ENCODE measurements at regions of chr4 and their contacts with region 1.

Region 1: GRCh38 chr4:96504386-96504785 is 664.5 kb downstream of the PDHA2 start:
- DNase-seq: no peak
- ATAC-seq: no peak
- H3K4me3 ChIP-seq: no peak overlapping the region
- H3K27ac ChIP-seq: no peak overlapping the region
- H3K4me1 ChIP-seq: no peaks in the 10 kb centered on the region
- H3K27me3 ChIP-seq: no peaks in the 10 kb centered on the region
- CTCF ChIP-seq: no peak
- EP300 ChIP-seq: no peak
- POLR2A ChIP-seq: no peak
- RAD21 ChIP-seq: no peak

Region 2: DNA sequence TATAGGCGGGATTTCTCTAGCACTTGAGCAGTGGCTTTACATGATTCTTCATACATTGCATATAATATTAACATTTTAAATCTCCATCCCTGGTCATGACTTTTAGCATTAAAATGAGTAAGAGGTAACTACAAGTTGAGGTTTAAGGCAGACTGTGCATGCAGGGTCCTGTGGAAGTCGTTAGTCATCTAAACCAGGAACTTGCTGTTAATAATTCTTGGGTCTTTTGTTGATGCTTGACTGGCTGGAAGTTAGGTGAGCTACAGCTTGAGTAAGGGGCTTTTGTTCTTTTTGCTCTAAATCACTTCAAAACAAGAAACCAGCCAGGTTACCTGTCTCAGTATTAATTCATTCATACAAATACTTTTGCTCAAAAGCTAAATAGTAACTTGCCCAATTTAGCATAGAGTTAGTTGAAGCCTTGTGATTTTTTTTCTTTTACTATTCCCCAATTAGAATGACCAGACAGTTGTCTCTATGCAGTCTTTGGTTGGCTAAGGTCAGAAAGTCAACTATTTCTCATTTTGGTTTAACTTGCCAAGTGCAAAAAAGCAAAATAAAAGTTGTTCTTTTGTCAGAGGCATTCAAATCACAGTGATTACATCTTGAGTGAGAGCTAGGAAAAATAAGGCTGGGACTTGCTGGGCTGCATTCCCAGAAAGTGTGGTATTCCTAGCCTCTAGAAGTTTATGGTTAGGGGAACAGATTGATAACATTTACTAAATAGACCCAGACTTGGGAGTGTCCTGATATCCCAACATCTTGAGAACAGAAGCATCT is 147.6 kb before region 1 on chr4:
- CTCF ChIA-PET with region 1: no interaction called
- POLR2A ChIA-PET with region 1: no interaction called
- in situ Hi-C with region 1: no loop called
- intact Hi-C with region 1: no loop called
- DNase-seq: no peak
- ATAC-seq: no peak
- H3K4me3 ChIP-seq: no peak overlapping the region
- H3K27ac ChIP-seq: no peak overlapping the region
- H3K4me1 ChIP-seq: no peaks in the 10 kb centered on the region
- H3K27me3 ChIP-seq: no peaks in the 10 kb centered on the region
- CTCF ChIP-seq: no peak
- EP300 ChIP-seq: no peak
- POLR2A ChIP-seq: no peak
- RAD21 ChIP-seq: no peak

Region 3: DNA sequence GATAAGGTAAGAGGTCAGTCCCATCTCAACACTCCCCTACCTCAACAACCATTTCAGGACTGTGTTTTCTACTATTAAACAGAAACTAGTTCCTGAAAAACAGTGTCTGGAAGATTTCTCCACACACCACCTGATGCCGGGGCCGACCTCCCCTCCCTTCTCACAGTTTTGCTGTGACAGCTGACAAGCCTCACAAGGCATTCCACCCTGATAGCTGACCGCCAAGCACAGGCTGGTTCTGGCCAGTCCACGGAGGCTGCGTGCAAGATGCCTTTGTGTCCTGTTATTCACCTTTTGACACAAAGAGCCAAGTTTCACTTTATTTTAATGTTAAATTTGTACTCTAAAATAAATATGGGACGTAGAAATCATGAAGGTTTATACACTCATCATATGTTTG is 94.1 kb after region 1 on chr4:
- CTCF ChIA-PET with region 1: no interaction called
- POLR2A ChIA-PET with region 1: no interaction called
- in situ Hi-C with region 1: no loop called
- intact Hi-C with region 1: no loop called
- DNase-seq: no peak
- ATAC-seq: no peak
- H3K4me3 ChIP-seq: no peak overlapping the region
- H3K27ac ChIP-seq: no peak overlapping the region
- H3K4me1 ChIP-seq: peaks cover 4% of the 10 kb centered on the region; the same call in 1 of the 2 replicates
- H3K27me3 ChIP-seq: no peaks in the 10 kb centered on the region
- CTCF ChIP-seq: no peak
- EP300 ChIP-seq: no peak
- POLR2A ChIP-seq: no peak
- RAD21 ChIP-seq: no peak

Region 4: DNA sequence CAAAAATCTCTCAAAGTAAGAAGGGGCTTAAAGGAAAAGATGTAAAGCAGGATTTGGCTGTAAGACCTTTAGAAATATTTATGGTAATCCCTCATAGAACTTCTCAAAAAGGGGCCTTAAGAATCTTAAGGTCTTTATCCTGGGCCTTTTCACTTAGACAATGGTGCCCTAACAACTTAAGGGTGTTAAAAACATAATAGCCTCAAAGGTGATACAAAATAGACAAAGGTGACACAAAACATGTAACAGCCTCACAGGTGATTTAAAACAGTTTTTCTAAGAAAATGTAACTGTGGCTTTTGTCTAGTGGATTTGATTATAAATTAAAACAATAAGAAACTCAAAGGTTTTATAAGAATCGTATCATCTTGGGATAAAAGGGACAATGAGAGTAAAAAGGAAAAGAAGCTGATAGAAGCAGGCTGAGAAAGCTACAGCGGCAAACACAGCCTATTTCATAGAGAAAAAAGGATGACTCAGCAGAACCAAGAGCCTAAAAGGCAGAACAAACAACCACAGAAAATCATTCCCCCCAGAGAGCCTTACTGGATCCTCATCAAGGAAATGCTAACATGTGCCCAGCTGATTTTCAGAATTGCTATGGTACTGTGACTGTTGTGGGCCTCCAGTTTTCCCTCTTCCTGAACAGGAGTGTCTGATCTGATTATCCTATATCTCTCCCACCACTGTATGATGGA is 1474.6 kb after region 1 on chr4:
- CTCF ChIA-PET with region 1: no interaction called
- POLR2A ChIA-PET with region 1: no interaction called
- in situ Hi-C with region 1: no loop called
- intact Hi-C with region 1: loop called (anchors 5 kb)
- DNase-seq: no peak
- ATAC-seq: no peak
- H3K4me3 ChIP-seq: no peak overlapping the region
- H3K27ac ChIP-seq: no peak overlapping the region
- H3K4me1 ChIP-seq: no peaks in the 10 kb centered on the region
- H3K27me3 ChIP-seq: no peaks in the 10 kb centered on the region
- CTCF ChIP-seq: no peak
- EP300 ChIP-seq: no peak
- POLR2A ChIP-seq: no peak
- RAD21 ChIP-seq: no peak

Measured in HepG2 (cell line).